ENCODE measurements at regions of chr15 and their contacts with region 1.

Region 1: DNA sequence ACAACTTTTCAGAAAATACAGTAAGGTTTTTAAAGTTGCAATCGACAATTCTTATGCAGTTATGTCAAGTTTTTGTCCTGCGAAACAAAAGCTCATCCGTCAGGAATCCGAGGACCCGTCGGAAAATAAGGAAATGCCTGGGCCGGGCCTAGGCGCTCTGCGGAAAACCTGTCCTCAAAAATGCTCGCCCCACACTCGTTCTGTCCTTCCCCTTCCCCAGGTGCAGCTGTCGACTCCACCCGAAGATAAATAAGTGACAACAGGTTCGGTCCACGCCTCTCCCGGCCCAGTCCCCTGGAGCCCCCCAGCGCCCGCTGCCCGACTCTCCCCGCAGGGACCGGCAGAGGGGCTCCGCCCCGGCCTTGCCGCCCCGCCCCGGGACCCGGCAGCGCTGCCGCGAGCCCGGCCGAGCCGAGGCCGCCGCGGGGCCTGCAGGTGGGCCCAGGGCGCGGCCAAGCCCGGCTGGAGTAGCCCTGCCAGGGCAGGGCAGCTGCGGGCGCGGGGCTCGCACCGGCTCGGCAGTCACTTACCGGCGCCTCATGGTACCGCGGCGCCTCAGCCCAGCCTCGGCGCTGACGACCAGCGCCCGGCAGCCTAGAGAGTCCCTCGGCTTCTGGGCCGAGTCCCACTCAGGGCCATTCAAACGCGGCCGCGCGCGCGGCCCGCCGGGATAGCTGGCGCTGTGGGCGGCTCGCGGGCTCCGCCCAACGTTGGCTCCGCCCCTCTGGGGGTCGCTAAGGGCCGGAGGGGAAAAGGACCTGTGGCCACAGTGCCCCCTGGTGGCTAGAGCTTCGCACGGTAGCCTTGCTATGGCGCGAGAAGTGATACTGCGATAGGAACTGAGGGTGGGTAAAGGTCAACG is at the start of gene KATNBL1:
- DNase-seq: peak; percentile 70
- ATAC-seq: peak; percentile 98
- H3K4me3 ChIP-seq: peak within 1 kb of the TSS; percentile 76
- H3K27ac ChIP-seq: peak within 1 kb of the TSS; percentile 53
- H3K4me1 ChIP-seq: 0 out of 2 replicates have a peak, but pooled peaks cover 3% of the 10 kb centered on the region
- H3K27me3 ChIP-seq: no peaks in the 10 kb centered on the region
- CTCF ChIP-seq: peak; percentile 82 to 89 (median 86)
- EP300 ChIP-seq: no peak
- POLR2A ChIP-seq: peak; percentile 88
- RAD21 ChIP-seq: peak; percentile 89
- polyA plus RNA-seq, gene KATNBL1: 7.8 to 11.9 TPM

Region 2: GRCh38 chr15:34055853-34056595 is 153.6 kb before region 1 on chr15:
- CTCF ChIA-PET with region 1: interaction called, 36 read pairs
- POLR2A ChIA-PET with region 1: no interaction called
- RAD21 ChIA-PET with region 1: interaction called, 6 read pairs
- SMC1A ChIA-PET with region 1: interaction called, 6 read pairs
- in situ Hi-C with region 1: no loop called
- intact Hi-C with region 1: no loop called
- DNase-seq: no peak
- ATAC-seq: no peak
- H3K4me3 ChIP-seq: no peak overlapping the region
- H3K27ac ChIP-seq: no peak overlapping the region
- H3K4me1 ChIP-seq: no peaks in the 10 kb centered on the region
- H3K27me3 ChIP-seq: no peaks in the 10 kb centered on the region
- CTCF ChIP-seq: no peak
- EP300 ChIP-seq: no peak
- POLR2A ChIP-seq: no peak
- RAD21 ChIP-seq: no peak

Region 3: GRCh38 chr15:34065941-34066340 is 143.7 kb before region 1 on chr15:
- CTCF ChIA-PET with region 1: interaction called, 36 read pairs
- POLR2A ChIA-PET with region 1: interaction called, 4 read pairs
- RAD21 ChIA-PET with region 1: interaction called, 15 read pairs
- SMC1A ChIA-PET with region 1: interaction called, 8 read pairs
- in situ Hi-C with region 1: no loop called
- intact Hi-C with region 1: loop called (anchors 1 kb)
- DNase-seq: no peak
- ATAC-seq: no peak
- H3K4me3 ChIP-seq: no peak overlapping the region
- H3K27ac ChIP-seq: no peak overlapping the region
- H3K4me1 ChIP-seq: no peaks in the 10 kb centered on the region
- H3K27me3 ChIP-seq: no peaks in the 10 kb centered on the region
- CTCF ChIP-seq: no peak
- EP300 ChIP-seq: no peak
- POLR2A ChIP-seq: no peak
- RAD21 ChIP-seq: no peak

Region 4: GRCh38 chr15:34262362-34262761 is 52.7 kb after region 1 on chr15:
- CTCF ChIA-PET with region 1: no interaction called
- POLR2A ChIA-PET with region 1: no interaction called
- RAD21 ChIA-PET with region 1: no interaction called
- SMC1A ChIA-PET with region 1: no interaction called
- in situ Hi-C with region 1: no loop called
- intact Hi-C with region 1: no loop called
- DNase-seq: no peak
- ATAC-seq: no peak
- H3K4me3 ChIP-seq: no peak overlapping the region
- H3K27ac ChIP-seq: no peak overlapping the region
- H3K4me1 ChIP-seq: no peaks in the 10 kb centered on the region
- H3K27me3 ChIP-seq: no peaks in the 10 kb centered on the region
- CTCF ChIP-seq: no peak
- EP300 ChIP-seq: no peak
- POLR2A ChIP-seq: peak; percentile 38; the same call in 1 of the 2 replicates
- RAD21 ChIP-seq: no peak

Measured in GM12878 (cell line).